B cell (primary cell): ENCODE measurements at regions of chr2 and their contacts with region 1.

Region 1: GRCh38 chr2:30711646-30712085 is 95.6 kb downstream of the CAPN13 start:
- DNase-seq: peak; percentile 90
- ATAC-seq: peak; percentile 96
- H3K4me3 ChIP-seq: no peak overlapping the region
- H3K4me3 Mint-ChIP-seq: no peak overlapping the region
- H3K27ac ChIP-seq: no peak overlapping the region
- H3K27ac Mint-ChIP-seq: no peak overlapping the region
- H3K4me1 ChIP-seq: peaks cover 0 to 9% of the 10 kb centered on the region in 2 donors
- H3K4me1 Mint-ChIP-seq: peaks cover 9% of the 10 kb centered on the region
- H3K27me3 ChIP-seq: no peaks in the 10 kb centered on the region
- H3K27me3 Mint-ChIP-seq: no peaks in the 10 kb centered on the region
- CTCF ChIP-seq: peak; percentile 100

Region 2: DNA sequence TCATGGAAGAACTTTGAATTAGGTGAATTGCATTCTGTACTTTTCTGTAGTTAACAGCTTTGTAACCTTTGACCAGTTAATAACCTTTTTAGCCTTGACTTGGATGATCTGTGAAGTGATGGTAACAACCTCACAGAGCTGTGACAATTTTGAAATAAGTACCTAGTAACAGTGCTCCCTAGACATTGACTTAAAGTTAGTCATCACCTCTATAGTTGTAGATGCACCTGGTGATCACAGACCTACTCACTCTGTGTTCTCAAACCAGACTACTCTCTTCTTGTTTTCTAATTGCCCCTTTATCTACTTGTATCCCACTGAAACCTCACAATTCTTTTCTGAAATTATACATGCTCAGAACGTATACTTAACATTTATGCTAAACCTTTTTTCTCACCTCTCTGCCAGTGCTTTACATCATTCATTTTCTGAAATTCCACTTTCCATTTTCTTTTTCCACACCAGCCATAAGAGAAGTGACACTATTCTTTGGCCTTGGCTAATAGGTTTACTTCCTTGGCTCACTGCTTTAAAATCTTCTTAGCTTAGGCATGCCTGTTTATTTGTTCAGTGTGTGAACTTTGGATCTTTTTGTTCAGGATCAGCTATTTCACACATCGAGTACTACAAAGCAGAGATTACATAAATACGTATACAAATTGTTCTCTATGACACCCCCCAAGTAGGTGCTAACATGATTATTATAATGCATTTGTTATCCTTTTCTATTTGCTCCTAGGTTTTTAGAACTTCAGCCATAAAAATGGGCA is 555.6 kb before region 1 on chr2:
- CTCF ChIA-PET with region 1: interaction called, 45 read pairs
- POLR2A ChIA-PET with region 1: no interaction called
- intact Hi-C with region 1: no loop called
- DNase-seq: no peak
- ATAC-seq: no peak
- H3K4me3 ChIP-seq: no peak overlapping the region
- H3K4me3 Mint-ChIP-seq: no peak overlapping the region
- H3K27ac ChIP-seq: no peak overlapping the region
- H3K27ac Mint-ChIP-seq: peak overlapping the region; percentile 2
- H3K4me1 ChIP-seq: peaks cover 18 to 20% of the 10 kb centered on the region in 2 donors
- H3K4me1 Mint-ChIP-seq: peaks cover 58% of the 10 kb centered on the region
- H3K27me3 ChIP-seq: no peaks in the 10 kb centered on the region
- H3K27me3 Mint-ChIP-seq: no peaks in the 10 kb centered on the region
- CTCF ChIP-seq: no peak

Region 3: DNA sequence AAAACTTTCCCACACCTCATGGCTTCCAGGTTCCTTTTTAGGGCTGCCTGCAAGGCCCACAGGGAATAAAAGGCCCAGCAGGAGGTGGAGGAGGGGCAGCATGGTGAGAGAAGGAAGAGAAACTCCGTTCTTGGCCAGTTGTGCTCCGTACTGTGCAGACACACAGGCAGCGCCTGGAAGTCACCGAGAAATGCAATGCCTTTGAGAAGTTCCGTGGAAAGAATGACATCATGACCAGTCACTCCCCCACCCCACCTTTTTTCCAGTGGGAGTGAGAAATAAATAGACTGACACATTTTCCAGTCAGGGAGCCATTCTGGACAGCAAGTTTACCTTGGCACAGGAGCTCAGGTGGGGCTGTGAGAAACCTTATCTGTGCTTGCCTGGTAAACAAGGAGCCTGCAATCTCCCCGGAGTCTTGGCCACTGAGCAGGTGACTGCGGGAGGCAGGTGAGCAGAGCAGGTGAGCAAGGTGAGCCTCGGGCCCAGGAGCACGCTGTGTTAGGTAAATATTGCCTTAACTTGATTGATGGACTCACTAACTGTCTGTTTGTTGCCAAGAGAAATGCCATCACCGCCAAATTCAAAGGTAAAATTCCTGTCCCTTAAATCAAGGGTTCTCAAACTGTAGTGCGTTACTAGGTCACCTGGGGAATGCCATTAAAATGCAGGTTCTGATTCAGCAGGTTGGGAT is 493.9 kb before region 1 on chr2:
- CTCF ChIA-PET with region 1: interaction called, 344 read pairs
- POLR2A ChIA-PET with region 1: no interaction called
- intact Hi-C with region 1: no loop called
- DNase-seq: peak; percentile 52
- ATAC-seq: peak; percentile 78
- H3K4me3 ChIP-seq: peak overlapping the region in 1 of 5 experiments; percentile 37
- H3K4me3 Mint-ChIP-seq: peak overlapping the region; percentile 55
- H3K27ac ChIP-seq: no peak overlapping the region
- H3K27ac Mint-ChIP-seq: peak overlapping the region; percentile 46
- H3K4me1 ChIP-seq: peaks cover 21 to 28% of the 10 kb centered on the region in 2 donors
- H3K4me1 Mint-ChIP-seq: peaks cover 36% of the 10 kb centered on the region
- H3K27me3 ChIP-seq: no peaks in the 10 kb centered on the region
- H3K27me3 Mint-ChIP-seq: no peaks in the 10 kb centered on the region
- CTCF ChIP-seq: no peak

Region 4: GRCh38 chr2:30336978-30337841 is 374.5 kb before region 1 on chr2:
- CTCF ChIA-PET with region 1: interaction called, 12 read pairs
- POLR2A ChIA-PET with region 1: interaction called, 6 read pairs
- intact Hi-C with region 1: loop called (anchors 5 kb)
- DNase-seq: peak; percentile 80
- ATAC-seq: peak; percentile 89
- H3K4me3 ChIP-seq: peak overlapping the region; percentile 29 to 62 (median 42)
- H3K4me3 Mint-ChIP-seq: peak overlapping the region; percentile 81
- H3K27ac ChIP-seq: peak overlapping the region; percentile 89 to 90
- H3K27ac Mint-ChIP-seq: peak overlapping the region; percentile 99
- H3K4me1 ChIP-seq: peaks cover 93 to 94% of the 10 kb centered on the region in 2 donors
- H3K4me1 Mint-ChIP-seq: peaks cover 92% of the 10 kb centered on the region
- H3K27me3 ChIP-seq: no peaks in the 10 kb centered on the region
- H3K27me3 Mint-ChIP-seq: no peaks in the 10 kb centered on the region
- CTCF ChIP-seq: no peak

Region 5: GRCh38 chr2:30862054-30862651 is 150.5 kb after region 1 on chr2:
- CTCF ChIA-PET with region 1: interaction called, 37 read pairs
- POLR2A ChIA-PET with region 1: no interaction called
- intact Hi-C with region 1: no loop called
- DNase-seq: peak; percentile 65
- ATAC-seq: peak; percentile 60
- H3K4me3 ChIP-seq: no peak overlapping the region
- H3K4me3 Mint-ChIP-seq: no peak overlapping the region
- H3K27ac ChIP-seq: no peak overlapping the region
- H3K27ac Mint-ChIP-seq: no peak overlapping the region
- H3K4me1 ChIP-seq: peaks cover 16% of the 10 kb centered on the region in 2 donors
- H3K4me1 Mint-ChIP-seq: peaks cover 17% of the 10 kb centered on the region
- H3K27me3 ChIP-seq: no peaks in the 10 kb centered on the region
- H3K27me3 Mint-ChIP-seq: peaks cover 9% of the 10 kb centered on the region
- CTCF ChIP-seq: peak; percentile 86

Region 6: GRCh38 chr2:31333527-31334183 is 622.0 kb after region 1 on chr2:
- CTCF ChIA-PET with region 1: interaction called, 260 read pairs
- POLR2A ChIA-PET with region 1: no interaction called
- intact Hi-C with region 1: loop called (anchors 1 kb)
- DNase-seq: peak; percentile 84
- ATAC-seq: peak; percentile 90
- H3K4me3 ChIP-seq: no peak overlapping the region
- H3K4me3 Mint-ChIP-seq: no peak overlapping the region
- H3K27ac ChIP-seq: no peak overlapping the region
- H3K27ac Mint-ChIP-seq: no peak overlapping the region
- H3K4me1 ChIP-seq: peaks cover 0 to 9% of the 10 kb centered on the region in 2 donors
- H3K4me1 Mint-ChIP-seq: peaks cover 13% of the 10 kb centered on the region
- H3K27me3 ChIP-seq: peaks cover 0 to 6% (median 2%) of the 10 kb centered on the region in 4 experiments
- H3K27me3 Mint-ChIP-seq: peaks cover 5% of the 10 kb centered on the region
- CTCF ChIP-seq: peak; percentile 98

Region 7: GRCh38 chr2:31349684-31350083 is 638.0 kb after region 1 on chr2:
- CTCF ChIA-PET with region 1: no interaction called
- POLR2A ChIA-PET with region 1: no interaction called
- intact Hi-C with region 1: no loop called
- DNase-seq: no peak
- ATAC-seq: no peak
- H3K4me3 ChIP-seq: no peak overlapping the region
- H3K4me3 Mint-ChIP-seq: no peak overlapping the region
- H3K27ac ChIP-seq: no peak overlapping the region
- H3K27ac Mint-ChIP-seq: no peak overlapping the region
- H3K4me1 ChIP-seq: no peaks in the 10 kb centered on the region
- H3K4me1 Mint-ChIP-seq: no peaks in the 10 kb centered on the region
- H3K27me3 ChIP-seq: peaks cover 0 to 15% (median 9%) of the 10 kb centered on the region in 4 experiments
- H3K27me3 Mint-ChIP-seq: peaks cover 41% of the 10 kb centered on the region
- CTCF ChIP-seq: no peak